K562 (cell line): ENCODE measurements at regions of chr20 and their contacts with region 1.

Region 1: GRCh38 chr20:35741892-35742740 is at the start of gene RBM39:
- DNase-seq: peak; percentile 92 to 100 (median 94)
- ATAC-seq: peak; percentile 91
- H3K4me3 ChIP-seq: peak within 1 kb of the TSS; percentile 81
- H3K27ac ChIP-seq: peak within 1 kb of the TSS; percentile 99
- H3K4me1 ChIP-seq: peaks cover 4 to 23% of the 10 kb centered on the region in 2 experiments; a peak in 3 of 5 replicates
- H3K27me3 ChIP-seq: no peaks in the 10 kb centered on the region
- CTCF ChIP-seq: peak; percentile 29 to 58 (median 41); a peak in 5 of 6 replicates
- EP300 ChIP-seq: peak; percentile 66; the same call in 1 of the 2 replicates
- POLR2A ChIP-seq: peak; percentile 99
- RAD21 ChIP-seq: peak; percentile 13 to 18; a peak in 1 of 4 replicates
- polyA plus RNA-seq, gene RBM39: 143 to 198 TPM

Region 2: GRCh38 chr20:35699127-35699975 is 42.8 kb before region 1 on chr20 and contains the starts of genes NFS1 and ROMO1:
- CTCF ChIA-PET with region 1: no interaction called
- POLR2A ChIA-PET with region 1: interaction called, 10 read pairs
- in situ Hi-C with region 1: no loop called
- intact Hi-C with region 1: no loop called
- DNase-seq: peak; percentile 90 to 97 (median 94)
- ATAC-seq: peak; percentile 94
- H3K4me3 ChIP-seq: peak within 1 kb of the TSS; percentile 96
- H3K27ac ChIP-seq: peak within 1 kb of the TSS; percentile 92
- H3K4me1 ChIP-seq: peaks cover 10 to 14% of the 10 kb centered on the region in 2 experiments; a peak in 4 of 5 replicates
- H3K27me3 ChIP-seq: no peaks in the 10 kb centered on the region
- CTCF ChIP-seq: peak; percentile 29 to 34 (median 32); a peak in 5 of 6 replicates
- EP300 ChIP-seq: no peak
- POLR2A ChIP-seq: peak; percentile 91
- RAD21 ChIP-seq: no peak
- polyA plus RNA-seq, gene NFS1: 11.5 to 13.9 TPM
- polyA plus RNA-seq, gene ROMO1: 635 to 741 TPM

Region 3: GRCh38 chr20:35726759-35727711 is 15.1 kb before region 1 on chr20:
- CTCF ChIA-PET with region 1: no interaction called
- POLR2A ChIA-PET with region 1: interaction called, 99 read pairs
- in situ Hi-C with region 1: no loop called
- intact Hi-C with region 1: no loop called
- DNase-seq: no peak
- ATAC-seq: no peak
- H3K4me3 ChIP-seq: no peak overlapping the region
- H3K27ac ChIP-seq: no peak overlapping the region
- H3K4me1 ChIP-seq: no peaks in the 10 kb centered on the region
- H3K27me3 ChIP-seq: no peaks in the 10 kb centered on the region
- CTCF ChIP-seq: no peak
- EP300 ChIP-seq: no peak
- POLR2A ChIP-seq: peak; percentile 27; the same call in 1 of the 2 replicates
- RAD21 ChIP-seq: no peak

Region 4: DNA sequence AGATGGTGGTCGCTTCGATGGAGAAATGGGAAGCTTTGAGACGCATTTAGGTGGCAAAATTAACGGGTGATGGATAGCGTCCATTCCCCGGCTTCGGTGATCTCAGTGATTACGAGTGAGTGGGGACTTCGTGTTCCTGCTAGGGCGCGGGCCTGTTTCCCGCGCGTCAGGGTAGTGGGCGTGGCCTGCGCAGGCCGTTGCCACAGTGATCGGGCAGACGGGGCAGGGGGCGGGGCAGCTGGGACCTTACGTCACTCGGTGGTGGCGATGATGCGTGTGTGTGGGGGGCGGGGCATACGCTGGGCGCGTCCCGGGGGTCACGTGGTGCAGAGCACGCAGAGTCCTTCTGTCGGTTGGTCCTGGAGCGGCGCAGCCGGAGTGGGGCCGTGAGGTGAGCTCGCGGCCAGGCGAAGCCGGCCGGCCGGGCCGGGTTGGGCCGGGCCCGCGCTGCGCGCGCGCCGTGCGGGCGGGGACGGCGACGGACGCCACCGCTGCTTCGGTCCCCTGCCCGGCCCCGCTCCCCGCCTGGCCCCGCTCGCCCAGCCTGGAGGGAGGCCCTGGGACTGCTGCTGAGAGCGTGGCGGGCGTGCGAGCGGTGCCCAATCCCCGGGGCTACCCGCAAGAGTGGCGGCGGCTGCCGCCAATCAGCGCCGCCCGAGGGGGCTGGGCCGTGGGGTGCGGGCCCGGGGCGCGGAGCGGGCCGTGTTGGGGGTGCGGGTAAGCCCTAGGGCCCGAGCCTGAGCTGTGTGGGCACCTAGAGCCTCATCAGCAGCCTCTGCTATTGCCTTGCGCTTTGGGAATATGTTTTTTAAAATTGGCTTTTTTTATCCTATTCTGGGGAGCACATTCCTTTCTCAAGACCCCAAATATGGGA is 29.8 kb after region 1 on chr20 and contains the start of gene PHF20:
- CTCF ChIA-PET with region 1: no interaction called
- POLR2A ChIA-PET with region 1: interaction called, 46 read pairs
- in situ Hi-C with region 1: no loop called
- intact Hi-C with region 1: loop called (anchors 2 kb)
- DNase-seq: peak; percentile 97 to 98 (median 98)
- ATAC-seq: peak; percentile 94
- H3K4me3 ChIP-seq: peak within 1 kb of the TSS; percentile 70
- H3K27ac ChIP-seq: peak within 1 kb of the TSS; percentile 86
- H3K4me1 ChIP-seq: peaks cover 26 to 46% of the 10 kb centered on the region in 2 experiments
- H3K27me3 ChIP-seq: no peaks in the 10 kb centered on the region
- CTCF ChIP-seq: no peak
- EP300 ChIP-seq: no peak; the same call in 1 of the 2 replicates
- POLR2A ChIP-seq: 0 out of 2 replicates have a peak, but pooled peaks have one; percentile 52
- RAD21 ChIP-seq: no peak
- polyA plus RNA-seq, gene PHF20: 178 to 196 TPM

Region 5: GRCh38 chr20:35883778-35884540 is 141.8 kb after region 1 on chr20:
- CTCF ChIA-PET with region 1: no interaction called
- POLR2A ChIA-PET with region 1: interaction called, 38 read pairs
- in situ Hi-C with region 1: no loop called
- intact Hi-C with region 1: loop called (anchors 2 kb)
- DNase-seq: peak in 3 of 4 experiments; percentile 31 to 64 (median 62)
- ATAC-seq: peak; percentile 94
- H3K4me3 ChIP-seq: no peak overlapping the region
- H3K27ac ChIP-seq: no peak overlapping the region
- H3K4me1 ChIP-seq: peaks cover 2 to 7% of the 10 kb centered on the region in 2 experiments; a peak in 4 of 5 replicates
- H3K27me3 ChIP-seq: no peaks in the 10 kb centered on the region
- CTCF ChIP-seq: peak; percentile 63 to 78 (median 72)
- EP300 ChIP-seq: no peak
- POLR2A ChIP-seq: no peak
- RAD21 ChIP-seq: peak; percentile 68 to 86

Region 6: DNA sequence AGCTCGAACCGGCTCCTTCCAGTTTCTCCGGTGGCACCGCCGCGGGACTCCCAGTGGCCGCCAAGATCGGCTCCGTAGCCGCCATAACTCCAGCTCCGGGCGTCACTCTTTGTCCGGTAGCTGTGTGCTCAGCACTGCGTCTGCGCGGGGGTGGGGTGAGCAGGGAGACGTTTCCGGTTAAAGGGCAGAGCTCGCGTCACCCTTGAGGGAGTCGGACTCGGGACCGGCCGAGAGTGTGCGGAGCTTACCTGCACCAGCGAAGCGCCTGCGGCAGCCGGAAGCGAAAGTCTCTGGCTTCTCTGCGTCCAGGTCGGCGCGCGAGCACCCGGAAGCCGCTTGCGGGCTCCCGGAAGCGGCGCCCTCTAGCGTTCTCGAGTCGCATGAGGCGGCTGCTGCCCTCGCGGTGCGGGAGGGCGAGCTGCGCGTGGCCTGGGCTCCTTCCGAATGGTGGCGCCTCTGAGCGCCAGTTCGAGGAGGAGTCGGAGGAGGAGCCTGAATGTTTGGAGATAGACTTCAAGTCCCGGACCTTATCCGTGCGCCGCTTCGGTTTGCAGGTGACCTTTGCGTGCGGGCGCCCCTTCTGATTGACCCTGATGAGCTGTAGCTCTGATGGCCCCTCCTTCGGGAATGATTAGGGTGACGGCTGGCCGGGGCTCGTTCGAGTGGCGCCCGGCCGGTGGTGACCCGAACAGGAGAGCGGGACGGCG is 212.2 kb after region 1 on chr20 and contains the start of gene SCAND1:
- CTCF ChIA-PET with region 1: no interaction called
- POLR2A ChIA-PET with region 1: interaction called, 55 read pairs
- in situ Hi-C with region 1: no loop called
- intact Hi-C with region 1: no loop called
- DNase-seq: peak; percentile 93 to 98 (median 94)
- ATAC-seq: peak; percentile 93
- H3K4me3 ChIP-seq: peak within 1 kb of the TSS; percentile 95
- H3K27ac ChIP-seq: peak within 1 kb of the TSS; percentile 98
- H3K4me1 ChIP-seq: peaks cover 9 to 16% of the 10 kb centered on the region in 2 experiments; a peak in 4 of 5 replicates
- H3K27me3 ChIP-seq: no peaks in the 10 kb centered on the region
- CTCF ChIP-seq: peak; percentile 100
- EP300 ChIP-seq: peak; percentile 19
- POLR2A ChIP-seq: peak; percentile 93
- RAD21 ChIP-seq: peak; percentile 48 to 60
- polyA plus RNA-seq, gene SCAND1: 0.08 to 0.11 TPM

Region 7: DNA sequence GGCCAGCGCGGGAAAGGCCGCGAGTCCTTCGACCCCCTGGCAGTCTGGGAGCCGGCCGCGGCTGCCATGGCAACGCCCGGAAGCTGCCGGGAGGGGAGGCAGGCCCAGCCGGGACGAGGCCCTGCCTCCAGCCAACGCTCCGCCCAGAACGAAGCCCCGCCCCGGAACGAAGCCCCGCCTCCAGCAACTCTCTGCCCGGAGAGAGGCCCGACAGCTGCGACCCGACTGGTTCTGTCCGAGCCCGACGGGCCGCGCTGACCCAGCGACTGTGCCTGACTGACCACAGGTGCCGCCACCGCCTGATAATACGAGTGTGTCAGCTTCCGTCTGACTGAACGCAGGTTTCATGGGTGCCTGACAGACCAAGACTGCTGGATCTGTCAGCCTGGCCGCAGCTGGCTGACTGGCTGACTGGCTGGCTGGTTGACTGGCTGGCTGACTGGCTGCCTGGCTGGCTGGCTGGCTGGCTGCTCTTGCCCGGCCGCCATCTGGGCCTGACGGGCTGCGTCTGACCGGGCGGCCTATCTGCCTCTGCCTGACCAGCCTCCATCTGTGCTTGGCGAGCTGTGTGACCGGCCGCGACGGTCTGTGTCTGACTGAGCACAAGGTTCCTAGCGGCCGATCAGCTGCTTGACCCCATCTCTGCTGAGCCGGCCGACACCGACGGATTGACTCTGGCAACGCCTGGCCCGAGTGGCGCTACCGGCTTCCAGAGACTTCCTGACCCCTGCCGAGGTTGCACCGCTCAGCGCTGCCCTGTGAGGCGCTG is 322.7 kb after region 1 on chr20:
- CTCF ChIA-PET with region 1: no interaction called
- POLR2A ChIA-PET with region 1: no interaction called
- in situ Hi-C with region 1: no loop called
- intact Hi-C with region 1: no loop called
- DNase-seq: peak; percentile 90 to 98 (median 97)
- ATAC-seq: peak; percentile 99
- H3K4me3 ChIP-seq: peak overlapping the region; percentile 49
- H3K27ac ChIP-seq: peak overlapping the region; percentile 27; the same call in 1 of the 3 replicates
- H3K4me1 ChIP-seq: peaks cover 15 to 20% of the 10 kb centered on the region in 2 experiments
- H3K27me3 ChIP-seq: no peaks in the 10 kb centered on the region
- CTCF ChIP-seq: no peak
- EP300 ChIP-seq: no peak
- POLR2A ChIP-seq: peak; percentile 74
- RAD21 ChIP-seq: peak in 1 of 2 experiments; percentile 2; a peak in 1 of 4 replicates